Activated B cell treated with CpG ODN at 0.5 μM for 24 hours (primary cell): ENCODE measurements at regions of chr18 and their contacts with region 1.

Region 1: DNA sequence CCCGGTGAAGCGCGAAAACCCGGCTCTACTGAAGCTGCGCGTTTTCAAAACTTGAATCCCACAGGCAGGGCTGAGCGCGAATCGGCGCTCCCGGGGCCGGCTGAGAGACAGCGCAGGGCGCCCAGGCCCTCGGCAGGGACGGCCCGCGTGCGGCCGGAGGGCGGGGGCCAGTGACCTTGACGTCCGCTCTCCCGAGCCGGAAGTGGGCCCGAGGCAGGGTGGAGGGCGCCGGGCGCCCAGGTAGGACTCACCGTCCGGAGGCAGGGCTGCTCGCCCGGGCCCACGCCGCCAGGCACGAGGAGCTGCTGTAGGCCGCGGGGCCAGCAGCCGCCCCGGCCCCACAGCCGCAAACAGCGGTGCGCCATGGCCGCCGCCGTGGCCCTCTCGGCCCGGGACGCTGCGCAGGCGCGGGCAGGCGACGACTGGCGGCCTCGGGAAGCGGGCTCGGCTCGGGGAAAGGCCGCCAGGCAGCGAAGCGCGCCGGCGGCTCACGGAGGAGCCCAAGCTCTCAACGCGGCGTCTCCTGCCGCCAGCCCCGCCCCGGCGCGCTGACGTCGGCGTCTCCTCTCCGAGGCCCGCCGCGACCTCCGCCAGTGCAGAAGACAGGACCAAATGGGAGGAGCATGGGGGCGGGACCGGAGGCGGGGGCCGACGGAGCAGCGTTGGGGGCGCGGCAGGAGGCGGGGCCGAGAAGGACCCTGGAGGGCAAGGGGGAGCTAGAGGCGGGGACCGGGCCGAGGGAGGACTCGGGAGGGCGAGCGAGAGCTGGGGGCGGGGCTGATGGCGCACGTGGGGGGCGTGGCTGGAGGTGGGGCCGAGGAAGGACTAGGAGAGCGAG is at the start of gene AFG3L2:
- DNase-seq: peak; percentile 100
- ATAC-seq: peak; percentile 88
- H3K4me3 Mint-ChIP-seq: peak within 1 kb of the TSS; percentile 90
- H3K27ac Mint-ChIP-seq: peak within 1 kb of the TSS; percentile 84
- H3K4me1 Mint-ChIP-seq: peaks cover 41% of the 10 kb centered on the region
- H3K27me3 Mint-ChIP-seq: no peaks in the 10 kb centered on the region
- CTCF ChIP-seq: no peak
- total RNA-seq, gene AFG3L2: 48.0 and 49.9 TPM in 2 replicates

Region 2: GRCh38 chr18:11980555-11981382 is 396.2 kb before region 1 on chr18:
- CTCF ChIA-PET with region 1: no interaction called
- POLR2A ChIA-PET with region 1: no interaction called
- intact Hi-C with region 1: loop called (anchors 1 kb)
- DNase-seq: peak; percentile 96
- ATAC-seq: peak; percentile 91
- H3K4me3 Mint-ChIP-seq: peak overlapping the region; percentile 85
- H3K27ac Mint-ChIP-seq: peak overlapping the region; percentile 46
- H3K4me1 Mint-ChIP-seq: peaks cover 18% of the 10 kb centered on the region
- H3K27me3 Mint-ChIP-seq: no peaks in the 10 kb centered on the region
- CTCF ChIP-seq: no peak

Region 3: DNA sequence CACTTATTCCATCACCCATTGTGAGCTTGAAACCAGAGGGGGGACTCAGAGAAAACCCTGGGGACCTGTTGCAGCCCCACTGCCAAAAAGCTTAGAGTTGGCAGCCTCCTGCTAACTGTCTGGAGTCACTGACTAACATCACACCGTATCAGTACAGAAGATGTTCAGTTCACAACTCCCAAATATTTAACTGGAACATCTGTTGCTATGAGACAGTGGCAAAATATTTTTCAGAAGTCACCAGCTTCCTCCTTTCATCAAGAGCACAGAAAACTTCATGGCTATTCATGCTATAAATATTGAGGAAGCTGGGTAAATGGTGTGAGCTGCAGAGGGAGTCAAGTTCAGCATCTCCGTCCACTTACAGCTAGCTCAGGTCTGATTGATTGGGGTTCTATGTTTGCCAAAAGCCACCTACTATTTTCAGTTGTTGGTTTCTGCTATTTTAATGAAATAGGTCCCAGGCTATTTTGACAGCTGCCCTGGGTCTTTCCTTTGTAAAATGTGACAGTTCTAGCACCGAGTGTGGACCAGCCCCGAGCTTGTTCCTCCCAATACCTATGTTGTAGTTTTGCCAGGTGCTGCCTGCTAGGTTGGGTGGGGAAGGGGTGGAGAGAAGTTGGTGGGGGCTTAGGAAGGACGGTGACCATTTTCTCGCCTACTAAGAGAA is 59.1 kb before region 1 on chr18:
- CTCF ChIA-PET with region 1: no interaction called
- POLR2A ChIA-PET with region 1: interaction called, 12 read pairs
- intact Hi-C with region 1: loop called (anchors 2 kb)
- DNase-seq: no peak
- ATAC-seq: peak; percentile 25
- H3K4me3 Mint-ChIP-seq: peak overlapping the region; percentile 37
- H3K27ac Mint-ChIP-seq: peak overlapping the region; percentile 61
- H3K4me1 Mint-ChIP-seq: peaks cover 72% of the 10 kb centered on the region
- H3K27me3 Mint-ChIP-seq: no peaks in the 10 kb centered on the region
- CTCF ChIP-seq: no peak

Region 4: GRCh38 chr18:12420831-12421421 is 44.0 kb after region 1 on chr18:
- CTCF ChIA-PET with region 1: no interaction called
- POLR2A ChIA-PET with region 1: no interaction called
- intact Hi-C with region 1: loop called (anchors 1 kb)
- DNase-seq: no peak
- ATAC-seq: no peak
- H3K4me3 Mint-ChIP-seq: peak overlapping the region; percentile 69
- H3K27ac Mint-ChIP-seq: no peak overlapping the region
- H3K4me1 Mint-ChIP-seq: peaks cover 15% of the 10 kb centered on the region
- H3K27me3 Mint-ChIP-seq: no peaks in the 10 kb centered on the region
- CTCF ChIP-seq: no peak

Region 5: DNA sequence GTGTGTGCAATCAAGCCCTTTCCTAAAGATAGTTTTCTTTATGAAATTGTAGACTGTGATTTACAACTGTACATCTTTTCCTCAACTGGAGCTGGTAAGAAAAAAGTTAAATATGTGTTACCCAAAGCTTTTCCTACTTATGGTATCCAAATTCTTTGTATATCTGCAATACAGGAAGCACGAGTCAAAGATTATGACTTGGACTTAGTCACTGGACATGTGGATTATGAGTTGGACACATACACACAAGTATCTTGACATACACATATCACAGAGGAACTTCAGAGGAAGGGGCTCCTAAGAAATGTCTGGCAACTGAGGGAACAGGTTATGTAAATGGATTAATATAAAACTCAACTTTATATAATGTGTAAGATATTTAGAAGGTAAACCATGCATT is 66.0 kb after region 1 on chr18:
- CTCF ChIA-PET with region 1: no interaction called
- POLR2A ChIA-PET with region 1: no interaction called
- intact Hi-C with region 1: no loop called
- DNase-seq: no peak
- ATAC-seq: no peak
- H3K4me3 Mint-ChIP-seq: no peak overlapping the region
- H3K27ac Mint-ChIP-seq: no peak overlapping the region
- H3K4me1 Mint-ChIP-seq: no peaks in the 10 kb centered on the region
- H3K27me3 Mint-ChIP-seq: no peaks in the 10 kb centered on the region
- CTCF ChIP-seq: no peak

Region 6: DNA sequence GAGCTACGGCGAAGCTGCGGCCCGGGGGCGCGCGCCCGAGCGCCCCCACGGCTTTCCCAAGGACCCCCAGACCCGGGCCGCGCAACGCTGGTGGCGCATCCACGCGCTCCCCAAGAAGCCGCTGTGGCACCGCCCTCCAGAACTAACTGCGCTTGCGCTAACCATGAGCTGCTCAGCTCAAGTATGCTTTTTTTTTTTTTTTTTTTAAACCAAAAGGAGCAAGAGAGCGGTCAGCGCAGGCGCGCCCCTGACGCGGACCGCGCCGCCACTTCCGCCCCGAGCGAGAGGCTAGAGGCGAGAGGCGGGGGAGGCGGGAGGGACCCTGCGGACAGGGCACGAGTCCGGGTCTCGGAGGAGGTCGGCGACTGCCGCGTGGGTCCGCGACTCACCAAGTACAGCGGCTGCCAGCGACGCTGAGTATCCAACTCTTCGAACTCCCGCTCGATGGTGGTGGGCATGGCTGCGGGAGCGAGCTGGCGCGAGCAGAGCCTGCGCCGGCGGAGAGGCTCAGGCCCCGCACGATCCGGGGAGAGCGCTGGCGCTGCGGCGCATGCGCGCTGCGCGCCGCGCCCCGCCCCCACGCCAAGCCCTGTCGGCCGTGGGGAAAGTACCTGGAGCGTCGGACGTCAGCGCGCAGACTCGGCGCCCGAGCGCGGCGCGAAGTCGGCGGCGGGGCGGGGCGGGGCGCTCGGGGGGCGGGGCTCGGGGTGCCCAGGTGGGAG is 506.9 kb after region 1 on chr18 and contains the start of gene PTPN2:
- CTCF ChIA-PET with region 1: no interaction called
- POLR2A ChIA-PET with region 1: interaction called, 32 read pairs
- intact Hi-C with region 1: loop called (anchors 1 kb)
- DNase-seq: peak; percentile 94
- ATAC-seq: peak; percentile 78
- H3K4me3 Mint-ChIP-seq: peak within 1 kb of the TSS; percentile 94
- H3K27ac Mint-ChIP-seq: peak within 1 kb of the TSS; percentile 93
- H3K4me1 Mint-ChIP-seq: peaks cover 72% of the 10 kb centered on the region
- H3K27me3 Mint-ChIP-seq: no peaks in the 10 kb centered on the region
- CTCF ChIP-seq: no peak
- total RNA-seq, gene PTPN2: 66.4 and 76.5 TPM in 2 replicates

Region 7: DNA sequence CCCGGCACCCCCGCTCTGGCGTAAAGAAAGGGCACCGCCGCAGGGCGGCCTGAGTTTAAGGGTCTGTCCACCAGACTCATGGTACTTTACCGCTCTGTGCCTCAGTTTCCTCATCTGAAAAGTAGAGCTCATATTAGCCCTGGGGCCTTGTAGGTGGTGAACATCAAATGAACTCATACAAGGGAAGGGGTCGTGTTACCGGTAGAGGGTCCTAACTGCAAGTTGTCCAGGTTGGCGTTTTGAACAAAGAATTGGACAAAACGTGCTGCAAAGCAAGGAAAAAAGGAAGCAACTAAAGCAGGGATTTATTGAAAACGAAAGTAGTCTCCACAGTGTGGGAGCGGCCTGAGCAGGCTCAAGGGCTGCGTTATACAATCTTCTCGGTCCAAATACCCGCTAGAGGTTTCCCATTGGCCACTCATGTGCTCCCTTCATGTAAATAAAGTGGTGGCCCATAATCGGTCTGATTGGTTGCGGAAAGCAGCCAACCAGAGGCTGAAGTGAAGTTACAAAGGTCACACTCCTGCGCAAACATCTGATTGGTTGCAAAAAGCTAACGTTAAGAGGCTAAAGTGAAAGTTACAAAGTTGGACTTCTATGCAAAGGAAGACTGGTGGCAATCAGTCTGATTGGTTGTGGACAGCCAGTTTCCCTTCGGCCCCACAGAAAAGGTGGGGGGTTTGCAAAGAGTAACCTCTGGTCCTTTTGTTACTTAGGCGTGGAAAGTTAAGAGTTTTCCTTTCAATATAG is 760.9 kb after region 1 on chr18:
- CTCF ChIA-PET with region 1: no interaction called
- POLR2A ChIA-PET with region 1: interaction called, 5 read pairs
- intact Hi-C with region 1: loop called (anchors 1 kb)
- DNase-seq: peak; percentile 43
- ATAC-seq: peak; percentile 87
- H3K4me3 Mint-ChIP-seq: peak overlapping the region; percentile 98
- H3K27ac Mint-ChIP-seq: peak overlapping the region; percentile 97
- H3K4me1 Mint-ChIP-seq: peaks cover 23% of the 10 kb centered on the region
- H3K27me3 Mint-ChIP-seq: no peaks in the 10 kb centered on the region
- CTCF ChIP-seq: no peak

Region 8: GRCh38 chr18:13726232-13726971 is 1349.5 kb after region 1 on chr18 and contains the starts of genes FAM210A and RNMT:
- CTCF ChIA-PET with region 1: no interaction called
- POLR2A ChIA-PET with region 1: interaction called, 3 read pairs
- intact Hi-C with region 1: loop called (anchors 1 kb)
- DNase-seq: peak; percentile 86
- ATAC-seq: peak; percentile 93
- H3K4me3 Mint-ChIP-seq: peak within 1 kb of the TSS; percentile 96
- H3K27ac Mint-ChIP-seq: peak within 1 kb of the TSS; percentile 96
- H3K4me1 Mint-ChIP-seq: peaks cover 46% of the 10 kb centered on the region
- H3K27me3 Mint-ChIP-seq: no peaks in the 10 kb centered on the region
- CTCF ChIP-seq: no peak
- total RNA-seq, gene FAM210A: 12.6 and 13.9 TPM in 2 replicates
- total RNA-seq, gene RNMT: 45.5 and 48.5 TPM in 2 replicates